Heart left ventricle (tissue), 16 donors: ENCODE measurements at regions of chr4 and their contacts with region 1.

Region 1: DNA sequence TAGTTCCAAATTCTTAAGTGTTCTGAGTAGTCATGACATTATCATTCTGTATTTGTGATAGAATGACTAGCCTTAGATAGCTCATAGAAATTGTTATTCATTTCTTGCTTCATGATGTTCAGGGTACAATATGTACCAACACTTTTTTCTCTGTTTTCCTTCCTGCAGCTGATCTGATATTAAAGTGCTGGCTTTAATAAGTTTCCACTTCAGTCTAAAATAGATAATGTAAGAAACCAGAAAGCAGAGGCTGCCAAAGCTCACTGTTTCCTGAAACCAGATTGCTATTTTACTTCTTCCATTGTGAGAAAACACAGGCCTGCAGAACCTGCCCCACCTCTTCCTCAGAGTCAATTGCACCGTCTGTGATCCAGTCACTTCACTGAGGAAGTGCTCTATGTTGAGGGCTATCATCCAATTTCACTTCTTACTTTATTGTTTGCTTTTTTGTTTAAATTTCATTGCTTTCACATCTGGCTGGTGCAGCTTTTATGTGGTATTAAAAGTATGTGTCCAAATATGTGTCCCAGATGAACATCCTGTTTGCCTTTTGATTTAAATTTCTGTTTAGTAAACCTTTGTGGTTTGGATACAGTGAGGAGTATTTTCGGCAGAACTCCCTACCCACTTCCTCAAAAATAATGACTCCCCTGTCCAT is 652.1 kb downstream of the ANKRD50 start:
- DNase-seq: peak in 4 of 5 donors; percentile 51 to 68 (median 58)
- ATAC-seq: peak; percentile 91 to 97 (median 94)
- H3K4me3 ChIP-seq: no peak overlapping the region
- H3K27ac ChIP-seq: peak overlapping the region; percentile 51 to 85 (median 80)
- H3K4me1 ChIP-seq: peaks cover 0 to 34% (median 23%) of the 10 kb centered on the region in 12 donors
- H3K27me3 ChIP-seq: no peaks in the 10 kb centered on the region
- CTCF ChIP-seq: peak in 1 of 12 donors; percentile 3
- POLR2A ChIP-seq: no peak

Region 2: DNA sequence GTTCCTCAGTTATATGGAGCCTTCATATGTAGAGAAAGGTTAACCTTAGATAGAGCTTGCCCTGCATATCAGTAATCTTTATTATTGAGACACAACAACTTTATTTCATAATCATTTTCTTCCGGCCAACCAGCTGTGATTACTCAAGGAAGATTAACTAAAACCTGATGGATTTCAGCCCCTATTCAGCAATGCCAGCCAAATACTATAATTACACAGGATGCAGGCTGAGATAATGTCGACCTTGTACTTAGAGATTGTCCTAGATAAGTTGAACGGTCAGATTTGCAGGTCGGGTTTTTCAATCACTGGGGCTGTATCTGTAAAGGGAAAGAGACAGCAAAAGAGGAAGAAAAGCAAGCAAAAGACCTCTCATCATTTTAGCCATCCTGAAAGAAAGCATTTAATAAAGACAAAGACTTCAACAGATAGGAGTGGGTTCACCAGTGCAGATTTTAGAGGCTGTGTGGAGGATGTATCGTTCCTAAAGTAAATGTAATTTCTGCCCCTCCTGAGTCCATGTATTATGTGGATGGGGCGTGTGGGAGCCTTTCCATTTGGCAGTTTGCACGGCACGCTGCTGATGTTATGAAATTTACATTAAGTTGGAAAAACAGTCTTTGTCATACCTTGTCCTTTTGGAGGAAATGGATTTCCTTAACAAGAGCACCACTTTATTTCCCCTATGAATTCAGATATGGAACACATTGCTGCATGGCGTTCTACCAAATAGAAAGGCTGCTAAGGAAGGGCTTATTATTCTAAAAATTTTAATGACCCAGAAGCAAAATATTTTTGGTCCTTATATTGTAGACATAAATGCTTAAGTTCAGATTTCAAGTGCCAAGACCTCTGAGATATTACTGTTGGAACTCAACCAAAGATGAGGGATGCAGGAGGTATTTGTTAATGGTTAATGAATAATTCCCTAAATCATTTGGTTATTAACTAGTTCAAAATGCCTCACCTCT is 167.1 kb before region 1 on chr4:
- intact Hi-C with region 1: loop called in 1 of 10 experiments (anchors 10 kb)
- DNase-seq: no peak
- ATAC-seq: peak; percentile 46 to 82 (median 63)
- H3K4me3 ChIP-seq: no peak overlapping the region
- H3K27ac ChIP-seq: peak overlapping the region in 11 of 12 donors; percentile 6 to 75 (median 62)
- H3K4me1 ChIP-seq: peaks cover 0 to 50% (median 21%) of the 10 kb centered on the region in 12 donors
- H3K27me3 ChIP-seq: no peaks in the 10 kb centered on the region
- CTCF ChIP-seq: no peak
- POLR2A ChIP-seq: no peak

Region 3: DNA sequence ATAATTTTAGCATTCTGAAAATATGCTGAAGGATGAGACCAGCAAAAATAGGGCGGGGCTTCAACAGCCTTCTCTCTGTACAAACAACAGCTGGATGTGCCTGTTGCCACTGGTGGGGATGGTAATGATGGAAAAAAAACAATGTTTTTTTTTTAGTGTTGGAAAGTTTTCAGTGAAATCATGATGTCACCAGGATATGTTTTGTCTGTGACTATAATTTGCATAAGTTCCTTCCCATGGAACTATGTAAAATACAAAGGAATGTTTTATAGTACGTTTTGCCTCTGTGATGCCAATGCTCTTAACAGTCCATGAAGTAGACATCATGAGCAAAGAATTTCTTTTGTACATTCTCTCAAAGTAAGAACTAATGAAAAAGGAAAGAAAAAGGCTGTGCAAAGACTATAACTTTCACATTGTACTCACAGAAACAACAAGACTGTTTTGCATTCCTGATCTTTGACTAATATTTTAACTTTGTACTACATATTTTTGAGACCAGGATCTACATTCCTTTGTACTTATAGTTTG is 74.1 kb before region 1 on chr4:
- intact Hi-C with region 1: loop called in 2 of 10 experiments (anchors 2 to 10 kb)
- DNase-seq: peak in 4 of 5 donors; percentile 67 to 81 (median 74)
- ATAC-seq: peak; percentile 61 to 92 (median 87)
- H3K4me3 ChIP-seq: no peak overlapping the region
- H3K27ac ChIP-seq: peak overlapping the region; percentile 31 to 86 (median 68)
- H3K4me1 ChIP-seq: peaks cover 0 to 30% (median 14%) of the 10 kb centered on the region in 12 donors
- H3K27me3 ChIP-seq: no peaks in the 10 kb centered on the region
- CTCF ChIP-seq: no peak
- POLR2A ChIP-seq: no peak

Region 4: GRCh38 chr4:124018383-124019317 is 41.7 kb before region 1 on chr4:
- intact Hi-C with region 1: no loop called
- DNase-seq: peak; percentile 53 to 74 (median 63)
- ATAC-seq: peak; percentile 79 to 94 (median 92)
- H3K4me3 ChIP-seq: no peak overlapping the region
- H3K27ac ChIP-seq: peak overlapping the region; percentile 18 to 78 (median 74)
- H3K4me1 ChIP-seq: peaks cover 0 to 21% (median 17%) of the 10 kb centered on the region in 12 donors
- H3K27me3 ChIP-seq: no peaks in the 10 kb centered on the region
- CTCF ChIP-seq: no peak
- POLR2A ChIP-seq: no peak

Region 5: GRCh38 chr4:124486426-124486825 is 426.0 kb after region 1 on chr4:
- intact Hi-C with region 1: no loop called
- DNase-seq: no peak
- ATAC-seq: no peak
- H3K4me3 ChIP-seq: no peak overlapping the region
- H3K27ac ChIP-seq: no peak overlapping the region
- H3K4me1 ChIP-seq: peaks cover 0 to 4% (median 0%) of the 10 kb centered on the region in 12 donors
- H3K27me3 ChIP-seq: no peaks in the 10 kb centered on the region
- CTCF ChIP-seq: no peak
- POLR2A ChIP-seq: no peak